CD4-positive, alpha-beta T cell (primary cell): ENCODE measurements at regions of chr17 and their contacts with region 1.

Region 1: DNA sequence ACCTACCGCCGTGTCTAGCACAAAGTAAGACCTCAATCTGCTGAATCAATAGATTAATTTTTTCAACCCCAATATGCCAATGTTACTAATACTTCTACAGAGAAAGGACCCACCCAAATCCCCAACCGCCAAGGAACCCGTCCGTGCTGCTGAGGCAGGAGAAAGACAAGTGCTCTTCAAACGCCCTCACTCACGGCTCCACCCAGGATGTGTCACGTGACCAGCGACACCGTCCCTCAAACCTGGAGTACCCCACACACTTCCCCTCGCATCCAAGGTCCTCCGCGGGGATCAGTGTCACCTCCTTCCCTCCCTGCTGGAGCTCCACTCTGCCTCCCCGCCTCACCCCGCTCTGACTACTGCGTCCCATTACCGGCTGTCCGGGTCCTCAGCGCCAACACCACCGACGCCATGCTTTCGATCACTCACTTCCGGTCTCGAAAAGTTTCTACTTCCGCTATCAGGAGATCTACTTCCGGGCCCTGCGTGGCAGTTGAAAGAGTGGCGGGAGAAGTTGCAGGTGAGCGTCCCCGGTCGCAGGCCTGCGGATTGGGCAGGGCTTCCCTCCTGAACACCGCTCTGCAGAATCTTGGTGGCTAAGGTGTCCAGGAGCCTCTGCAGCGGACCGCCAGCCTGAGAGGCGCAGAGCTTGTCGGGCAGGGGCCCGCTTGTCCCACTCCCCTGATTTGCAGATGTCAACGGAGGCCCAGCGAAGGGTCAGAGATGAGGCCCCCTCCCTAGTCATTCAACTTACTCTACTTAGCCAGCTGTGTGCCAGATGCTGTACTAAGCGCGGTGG is at the starts of genes EME1 and MRPL27:
- DNase-seq: peak; percentile 74 to 93 (median 80)
- ATAC-seq: peak; percentile 92
- H3K4me3 ChIP-seq: peak within 1 kb of the TSS; percentile 85
- H3K4me3 Mint-ChIP-seq: peak within 1 kb of the TSS; percentile 97
- H3K27ac ChIP-seq: peak within 1 kb of the TSS; percentile 97
- H3K27ac Mint-ChIP-seq: peak within 1 kb of the TSS; percentile 96
- H3K4me1 ChIP-seq: peaks cover 22% of the 10 kb centered on the region
- H3K4me1 Mint-ChIP-seq: peaks cover 22% of the 10 kb centered on the region
- H3K27me3 ChIP-seq: no peaks in the 10 kb centered on the region
- H3K27me3 Mint-ChIP-seq: no peaks in the 10 kb centered on the region
- CTCF ChIP-seq: no peak
- total RNA-seq, gene EME1: 0.36 to 0.92 TPM
- total RNA-seq, gene MRPL27: 13.7 to 14.8 TPM

Region 2: GRCh38 chr17:50328363-50329325 is 44.3 kb before region 1 on chr17:
- CTCF ChIA-PET with region 1: no interaction called
- POLR2A ChIA-PET with region 1: no interaction called
- intact Hi-C with region 1: no loop called
- DNase-seq: no peak
- ATAC-seq: no peak
- H3K4me3 ChIP-seq: no peak overlapping the region
- H3K4me3 Mint-ChIP-seq: no peak overlapping the region
- H3K27ac ChIP-seq: no peak overlapping the region
- H3K27ac Mint-ChIP-seq: no peak overlapping the region
- H3K4me1 ChIP-seq: no peaks in the 10 kb centered on the region
- H3K4me1 Mint-ChIP-seq: peaks cover 6% of the 10 kb centered on the region
- H3K27me3 ChIP-seq: peaks cover 0 to 3% of the 10 kb centered on the region in 2 experiments
- H3K27me3 Mint-ChIP-seq: no peaks in the 10 kb centered on the region
- CTCF ChIP-seq: no peak

Region 3: GRCh38 chr17:50345432-50346312 is 27.3 kb before region 1 on chr17 and contains the start of gene XYLT2:
- CTCF ChIA-PET with region 1: no interaction called
- POLR2A ChIA-PET with region 1: interaction called, 14 read pairs
- intact Hi-C with region 1: loop called in 1 of 2 experiments (anchors 1 kb)
- DNase-seq: peak; percentile 77 to 97 (median 92)
- ATAC-seq: peak; percentile 92
- H3K4me3 ChIP-seq: peak within 1 kb of the TSS; percentile 85
- H3K4me3 Mint-ChIP-seq: peak within 1 kb of the TSS; percentile 95
- H3K27ac ChIP-seq: peak within 1 kb of the TSS; percentile 53 to 65
- H3K27ac Mint-ChIP-seq: peak within 1 kb of the TSS; percentile 76
- H3K4me1 ChIP-seq: peaks cover 28% of the 10 kb centered on the region
- H3K4me1 Mint-ChIP-seq: peaks cover 34% of the 10 kb centered on the region
- H3K27me3 ChIP-seq: no peaks in the 10 kb centered on the region
- H3K27me3 Mint-ChIP-seq: no peaks in the 10 kb centered on the region
- CTCF ChIP-seq: no peak
- total RNA-seq, gene XYLT2: 11.0 to 12.2 TPM

Region 4: DNA sequence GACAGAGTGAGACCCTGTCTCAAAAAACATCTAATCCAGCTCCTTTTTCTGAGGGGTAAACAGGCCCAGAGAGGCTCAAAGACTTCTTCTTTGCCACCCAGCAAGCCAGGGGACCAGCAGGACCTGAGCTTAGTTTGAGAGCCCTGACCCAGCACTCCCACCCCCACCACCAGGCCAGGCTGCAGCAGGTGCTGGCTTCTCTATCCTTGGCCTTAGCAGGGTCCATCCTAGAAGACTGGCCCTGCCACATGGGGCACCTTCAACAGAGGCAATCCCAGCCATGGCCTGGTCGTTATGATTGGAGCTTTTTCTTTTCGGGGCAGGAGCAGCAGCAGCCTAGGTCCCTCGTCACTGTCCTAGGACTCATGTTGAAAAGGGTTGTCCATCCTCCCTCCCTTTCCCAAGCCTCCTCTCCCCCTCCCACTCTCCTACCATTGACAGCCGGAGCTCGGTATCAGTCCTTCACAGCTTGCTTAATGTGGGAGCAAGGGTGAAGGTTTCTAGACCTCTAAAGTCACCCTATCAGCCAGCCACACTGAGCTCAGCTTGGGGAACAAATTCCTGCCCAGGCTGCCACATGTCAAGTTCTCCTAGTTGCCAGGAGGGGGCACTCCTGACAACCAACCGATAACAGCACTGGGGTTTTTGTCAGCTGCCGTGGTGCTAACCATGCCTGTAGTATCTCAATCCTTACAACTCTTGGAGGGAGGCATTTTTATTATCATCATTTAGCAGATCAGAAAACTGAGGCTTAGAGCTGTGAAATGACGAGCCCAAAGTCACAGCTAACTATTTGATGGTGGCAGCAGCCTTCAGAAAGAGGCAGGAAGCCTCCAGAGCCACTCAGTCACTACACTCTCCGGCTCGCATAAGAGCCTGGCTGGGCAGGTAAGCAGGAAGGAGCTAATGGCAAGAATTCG is 11.1 kb before region 1 on chr17:
- CTCF ChIA-PET with region 1: interaction called, 9 read pairs
- POLR2A ChIA-PET with region 1: interaction called, 21 read pairs
- intact Hi-C with region 1: no loop called
- DNase-seq: peak; percentile 39 to 84 (median 49)
- ATAC-seq: peak; percentile 97
- H3K4me3 ChIP-seq: no peak overlapping the region
- H3K4me3 Mint-ChIP-seq: peak overlapping the region; percentile 13
- H3K27ac ChIP-seq: no peak overlapping the region
- H3K27ac Mint-ChIP-seq: peak overlapping the region; percentile 10
- H3K4me1 ChIP-seq: peaks cover 11% of the 10 kb centered on the region
- H3K4me1 Mint-ChIP-seq: peaks cover 9% of the 10 kb centered on the region
- H3K27me3 ChIP-seq: no peaks in the 10 kb centered on the region
- H3K27me3 Mint-ChIP-seq: no peaks in the 10 kb centered on the region
- CTCF ChIP-seq: peak; percentile 79

Region 5: DNA sequence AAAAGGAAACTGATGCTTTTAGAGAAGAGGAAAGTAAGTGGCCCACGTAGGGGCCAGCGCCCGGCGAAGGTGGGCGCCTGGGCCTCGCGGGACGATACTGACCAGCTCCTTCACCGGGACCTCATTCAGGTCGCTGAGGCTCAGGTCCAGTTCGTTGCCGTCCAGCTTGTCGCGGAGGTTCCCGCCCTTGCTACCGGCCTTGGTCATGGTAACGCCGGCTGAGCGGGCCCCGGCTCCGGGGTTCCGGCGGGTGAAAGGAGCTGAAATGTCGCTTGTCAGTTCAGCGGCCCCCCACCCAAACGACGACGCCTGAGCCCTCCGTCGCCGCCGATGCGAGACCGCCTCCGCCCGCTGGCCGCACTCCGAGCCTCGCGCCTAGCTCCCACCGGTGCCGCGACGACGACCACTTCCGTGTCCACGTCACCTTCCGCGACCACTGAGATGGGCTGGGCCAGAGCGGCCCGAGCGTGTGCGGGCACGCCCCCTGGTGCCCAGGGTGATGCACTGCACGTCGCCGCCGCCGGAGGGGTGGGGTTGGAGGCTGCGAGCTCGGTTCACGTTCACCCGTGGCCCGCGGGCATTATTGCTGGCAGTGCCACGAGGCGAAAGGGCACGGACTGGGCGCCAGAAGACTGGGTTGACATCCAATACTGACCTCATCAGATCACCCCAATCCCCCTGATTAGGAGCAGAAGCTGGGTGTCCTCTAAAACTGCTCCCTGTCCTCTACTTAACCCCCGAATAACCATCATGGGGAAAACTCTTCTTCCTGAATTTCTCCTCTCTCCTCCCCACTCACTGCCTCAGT is 24.4 kb after region 1 on chr17 and contains the start of gene LRRC59:
- CTCF ChIA-PET with region 1: interaction called, 20 read pairs
- POLR2A ChIA-PET with region 1: interaction called, 52 read pairs
- intact Hi-C with region 1: loop called in 1 of 2 experiments (anchors 1 kb)
- DNase-seq: peak; percentile 87 to 96 (median 92)
- ATAC-seq: peak; percentile 99
- H3K4me3 ChIP-seq: peak within 1 kb of the TSS; percentile 100
- H3K4me3 Mint-ChIP-seq: peak within 1 kb of the TSS; percentile 99
- H3K27ac ChIP-seq: peak within 1 kb of the TSS; percentile 60 to 87
- H3K27ac Mint-ChIP-seq: peak within 1 kb of the TSS; percentile 83
- H3K4me1 ChIP-seq: peaks cover 30% of the 10 kb centered on the region
- H3K4me1 Mint-ChIP-seq: peaks cover 45% of the 10 kb centered on the region
- H3K27me3 ChIP-seq: no peaks in the 10 kb centered on the region
- H3K27me3 Mint-ChIP-seq: no peaks in the 10 kb centered on the region
- CTCF ChIP-seq: peak; percentile 99
- total RNA-seq, gene LRRC59: 45.1 to 51.5 TPM

Region 6: DNA sequence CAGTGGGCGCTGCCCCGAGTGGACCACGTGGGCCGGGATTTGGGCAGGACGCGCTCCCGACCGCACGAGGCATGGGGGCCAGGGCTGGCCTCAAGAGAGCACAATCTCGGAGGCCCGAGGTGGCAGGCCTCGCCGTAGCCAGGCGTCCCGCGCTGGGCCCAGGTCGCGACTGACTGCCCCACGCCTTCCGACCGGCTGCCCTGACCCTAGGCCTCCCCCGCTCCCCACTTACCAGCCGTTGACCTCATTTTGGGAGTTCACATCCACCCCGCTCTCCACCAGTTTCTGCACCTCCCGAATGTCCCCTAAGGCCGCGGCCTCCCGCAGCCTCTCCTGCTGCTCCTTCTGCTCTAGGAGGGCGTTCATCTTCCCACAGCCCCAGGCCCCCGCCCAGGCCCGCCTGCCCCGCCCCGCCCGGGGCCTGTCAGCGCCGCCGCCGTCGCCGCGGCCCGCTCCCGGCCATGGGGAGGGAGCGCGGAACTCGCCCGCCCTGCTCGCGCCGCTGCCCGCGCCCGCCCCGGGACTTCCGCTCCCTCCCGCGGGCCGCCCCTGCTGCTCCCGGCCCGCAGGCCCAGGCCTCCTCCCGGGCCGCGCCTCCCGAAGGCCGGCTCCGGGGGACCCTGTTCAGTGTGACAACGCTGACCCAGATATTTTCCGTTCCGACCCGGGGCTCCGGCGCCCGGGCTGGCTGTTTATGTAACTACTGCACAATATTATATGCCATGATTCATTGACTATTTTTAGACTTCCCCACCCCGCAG is 334.5 kb after region 1 on chr17 and contains the start of gene ANKRD40:
- CTCF ChIA-PET with region 1: no interaction called
- POLR2A ChIA-PET with region 1: no interaction called
- intact Hi-C with region 1: loop called in 1 of 2 experiments (anchors 10 kb)
- DNase-seq: peak; percentile 82 to 95 (median 89)
- ATAC-seq: peak; percentile 80
- H3K4me3 ChIP-seq: peak within 1 kb of the TSS; percentile 75
- H3K4me3 Mint-ChIP-seq: peak within 1 kb of the TSS; percentile 99
- H3K27ac ChIP-seq: peak within 1 kb of the TSS; percentile 84 to 95
- H3K27ac Mint-ChIP-seq: peak within 1 kb of the TSS; percentile 97
- H3K4me1 ChIP-seq: peaks cover 41% of the 10 kb centered on the region
- H3K4me1 Mint-ChIP-seq: peaks cover 44% of the 10 kb centered on the region
- H3K27me3 ChIP-seq: no peaks in the 10 kb centered on the region
- H3K27me3 Mint-ChIP-seq: no peaks in the 10 kb centered on the region
- CTCF ChIP-seq: no peak
- total RNA-seq, gene ANKRD40: 22.8 to 24.0 TPM

Region 7: GRCh38 chr17:51260125-51260880 is 887.3 kb after region 1 on chr17 and contains the start of gene UTP18:
- CTCF ChIA-PET with region 1: no interaction called
- POLR2A ChIA-PET with region 1: no interaction called
- intact Hi-C with region 1: loop called in 1 of 2 experiments (anchors 10 kb)
- DNase-seq: peak; percentile 89 to 99 (median 96)
- ATAC-seq: peak; percentile 87
- H3K4me3 ChIP-seq: peak within 1 kb of the TSS; percentile 90
- H3K4me3 Mint-ChIP-seq: peak within 1 kb of the TSS; percentile 99
- H3K27ac ChIP-seq: peak within 1 kb of the TSS; percentile 96 to 99
- H3K27ac Mint-ChIP-seq: peak within 1 kb of the TSS; percentile 99
- H3K4me1 ChIP-seq: peaks cover 36% of the 10 kb centered on the region
- H3K4me1 Mint-ChIP-seq: peaks cover 85% of the 10 kb centered on the region
- H3K27me3 ChIP-seq: no peaks in the 10 kb centered on the region
- H3K27me3 Mint-ChIP-seq: no peaks in the 10 kb centered on the region
- CTCF ChIP-seq: no peak
- total RNA-seq, gene UTP18: 48.5 to 49.8 TPM